Naive thymus-derived CD8-positive, alpha-beta T cell (primary cell): ENCODE measurements at regions of chr11 and their contacts with region 1.

Region 1: DNA sequence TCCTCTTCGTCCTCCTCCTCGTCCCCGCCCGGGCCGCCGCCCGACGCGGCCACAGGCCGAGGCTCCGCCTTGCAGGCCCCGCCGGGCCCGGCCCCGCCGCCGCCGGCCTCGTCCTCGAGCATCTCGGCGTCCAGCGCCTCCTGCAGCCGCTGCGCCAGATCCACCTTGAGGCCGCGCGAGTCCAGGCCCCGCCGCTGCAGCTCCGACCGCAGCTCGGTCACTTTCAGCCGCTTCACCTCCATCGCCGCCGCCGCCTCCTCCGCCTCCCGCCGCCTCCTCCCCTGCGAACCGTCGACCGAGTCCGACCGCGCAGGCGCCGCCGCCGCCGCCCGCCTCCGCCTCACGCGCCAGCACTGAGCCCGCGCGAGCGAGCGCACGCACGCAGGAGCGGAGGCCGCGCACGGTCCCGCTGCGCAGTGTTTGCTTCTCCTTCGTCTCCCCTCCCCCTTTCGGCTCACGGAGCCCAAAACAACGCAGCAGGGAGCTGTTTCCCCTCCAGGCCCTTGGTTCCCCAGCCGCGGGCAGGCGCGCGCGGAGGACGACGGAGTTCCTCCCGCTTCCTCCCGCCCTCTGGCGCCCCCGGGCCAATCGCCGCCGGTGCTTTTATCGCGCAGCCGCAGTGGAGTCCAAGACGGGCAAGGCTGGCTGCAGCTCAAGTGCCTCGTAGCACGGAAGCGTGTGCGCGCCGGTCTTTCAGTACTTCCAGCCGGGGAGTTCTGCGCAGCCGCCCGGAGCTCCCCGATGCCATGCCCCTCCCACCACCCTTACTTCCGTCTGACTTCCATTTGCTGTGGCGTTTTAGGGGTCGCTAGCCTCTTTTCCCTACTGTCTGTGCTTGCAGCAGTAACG is at the start of gene HNRNPUL2:
- DNase-seq: peak; percentile 98 to 99 (median 99)
- ATAC-seq: peak; percentile 79 to 81
- H3K4me3 Mint-ChIP-seq: peak within 1 kb of the TSS; percentile 92 to 99 (median 96)
- H3K27ac Mint-ChIP-seq: peak within 1 kb of the TSS; percentile 90 to 100 (median 99)
- H3K4me1 Mint-ChIP-seq: peaks cover 25 to 66% (median 53%) of the 10 kb centered on the region in 4 donors
- H3K27me3 Mint-ChIP-seq: peaks cover 0 to 2% (median 0%) of the 10 kb centered on the region in 5 donors
- polyA plus RNA-seq, gene HNRNPUL2: 0.99 to 3.0 (median 1.0) TPM

Region 2: DNA sequence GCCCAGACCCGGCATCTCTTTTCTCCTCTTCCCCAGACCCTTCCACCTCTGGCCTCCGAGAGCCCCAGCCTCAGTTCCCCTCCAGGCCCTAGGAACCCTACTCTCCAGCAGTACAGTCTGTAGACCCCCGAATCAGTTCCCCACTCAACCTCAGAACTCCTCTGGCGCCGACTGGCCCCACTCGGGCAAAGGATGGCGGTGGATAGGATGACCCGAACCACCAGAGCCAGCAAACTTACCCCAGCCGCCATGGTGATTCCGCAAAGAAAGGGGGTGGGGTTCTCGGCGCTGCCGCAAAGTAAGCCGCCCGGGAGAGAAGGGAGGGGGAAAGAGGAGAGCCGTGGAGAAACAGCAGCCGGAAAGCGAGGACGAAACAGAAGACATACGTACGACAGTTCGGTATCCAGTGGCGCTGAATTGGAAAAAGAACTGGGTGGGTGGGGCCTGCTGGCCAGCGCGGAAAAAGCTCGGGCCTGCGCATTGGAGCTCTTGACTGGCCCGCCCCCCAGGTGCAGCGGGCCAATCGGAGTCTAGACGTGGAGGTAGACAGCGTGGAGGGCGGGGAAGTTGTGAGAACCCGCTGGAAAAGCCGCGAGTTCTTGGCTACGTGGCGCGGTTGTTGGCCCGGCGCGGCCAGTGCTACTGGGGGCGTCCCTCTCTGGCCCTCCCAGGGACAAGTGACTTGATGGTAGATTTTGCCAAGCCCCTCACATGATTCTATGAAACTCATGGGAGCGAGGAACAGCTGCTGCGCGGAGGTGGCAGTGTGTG is 153.4 kb before region 1 on chr11 and contains the start of gene EEF1G:
- POLR2A ChIA-PET with region 1: interaction called, 23 read pairs
- DNase-seq: peak; percentile 94 to 100 (median 98)
- ATAC-seq: peak; percentile 91 to 92
- H3K4me3 Mint-ChIP-seq: peak within 1 kb of the TSS; percentile 93 to 99 (median 97)
- H3K27ac Mint-ChIP-seq: peak within 1 kb of the TSS; percentile 90 to 99 (median 98)
- H3K4me1 Mint-ChIP-seq: peaks cover 41 to 59% (median 53%) of the 10 kb centered on the region in 4 donors
- H3K27me3 Mint-ChIP-seq: no peaks in the 10 kb centered on the region
- polyA plus RNA-seq, gene EEF1G: 1,637 to 2,152 (median 1,960) TPM

Region 3: GRCh38 chr11:62645956-62646824 is 80.9 kb before region 1 on chr11 and contains the start of gene GANAB:
- POLR2A ChIA-PET with region 1: interaction called, 10 read pairs
- DNase-seq: peak; percentile 94 to 99 (median 97)
- ATAC-seq: peak; percentile 97 to 98
- H3K4me3 Mint-ChIP-seq: peak within 1 kb of the TSS; percentile 92 to 99 (median 97)
- H3K27ac Mint-ChIP-seq: peak within 1 kb of the TSS; percentile 90 to 99 (median 98)
- H3K4me1 Mint-ChIP-seq: peaks cover 9 to 50% (median 32%) of the 10 kb centered on the region in 4 donors
- H3K27me3 Mint-ChIP-seq: no peaks in the 10 kb centered on the region
- polyA plus RNA-seq, gene GANAB: 171 to 197 (median 174) TPM

Region 4: DNA sequence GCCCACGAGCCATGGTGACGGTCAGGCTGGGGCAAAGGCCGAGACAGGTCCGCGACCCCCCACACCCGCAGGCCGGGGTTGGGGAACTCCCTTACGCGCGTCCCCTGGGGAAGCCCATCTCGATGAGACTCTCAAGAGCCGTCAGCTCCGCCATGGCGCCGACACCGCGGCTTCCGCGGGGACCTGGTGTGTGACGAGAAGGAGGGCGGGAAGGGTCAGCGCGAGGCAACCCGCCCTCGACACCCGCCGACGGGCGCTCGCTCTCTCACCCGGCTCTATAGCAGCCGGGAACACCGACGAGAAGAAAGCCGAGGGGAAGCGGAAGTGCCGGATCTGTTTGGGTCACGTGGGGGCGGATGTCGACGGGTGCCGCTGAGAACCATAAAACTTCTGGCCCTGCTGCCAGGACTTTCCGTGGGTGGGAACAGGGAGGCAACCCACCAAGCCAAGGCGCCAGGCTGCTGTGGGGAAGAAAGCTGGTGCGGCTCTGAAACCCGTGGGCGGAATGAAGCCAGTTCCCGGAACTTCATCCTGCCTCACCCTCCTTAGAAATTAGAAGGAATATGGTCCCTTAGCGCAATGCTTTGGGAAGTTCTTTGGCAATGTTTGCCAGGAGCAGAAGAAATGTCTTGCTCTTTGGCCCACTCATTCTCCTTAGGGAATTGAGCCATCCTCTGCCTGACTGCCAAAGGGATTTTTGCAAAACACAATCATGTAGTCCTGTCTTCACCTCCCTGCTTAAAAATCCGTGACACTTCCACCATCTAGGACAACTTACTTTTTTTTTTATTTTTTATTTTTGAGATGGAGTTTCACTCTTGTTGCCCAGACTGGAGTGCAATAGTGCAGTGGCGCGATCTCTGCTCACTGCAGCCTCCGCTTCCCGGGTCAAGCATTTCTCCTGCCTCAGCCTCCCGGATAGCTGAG is 48.1 kb before region 1 on chr11 and contains the start of gene UBXN1:
- POLR2A ChIA-PET with region 1: interaction called, 38 read pairs
- DNase-seq: peak; percentile 68 to 89 (median 78)
- ATAC-seq: peak; percentile 84 to 87
- H3K4me3 Mint-ChIP-seq: peak within 1 kb of the TSS; percentile 86 to 94 (median 90)
- H3K27ac Mint-ChIP-seq: peak within 1 kb of the TSS; percentile 94 to 98 (median 95)
- H3K4me1 Mint-ChIP-seq: peaks cover 19 to 42% (median 38%) of the 10 kb centered on the region in 4 donors
- H3K27me3 Mint-ChIP-seq: no peaks in the 10 kb centered on the region
- polyA plus RNA-seq, gene UBXN1: 188 to 219 (median 218) TPM

Region 5: DNA sequence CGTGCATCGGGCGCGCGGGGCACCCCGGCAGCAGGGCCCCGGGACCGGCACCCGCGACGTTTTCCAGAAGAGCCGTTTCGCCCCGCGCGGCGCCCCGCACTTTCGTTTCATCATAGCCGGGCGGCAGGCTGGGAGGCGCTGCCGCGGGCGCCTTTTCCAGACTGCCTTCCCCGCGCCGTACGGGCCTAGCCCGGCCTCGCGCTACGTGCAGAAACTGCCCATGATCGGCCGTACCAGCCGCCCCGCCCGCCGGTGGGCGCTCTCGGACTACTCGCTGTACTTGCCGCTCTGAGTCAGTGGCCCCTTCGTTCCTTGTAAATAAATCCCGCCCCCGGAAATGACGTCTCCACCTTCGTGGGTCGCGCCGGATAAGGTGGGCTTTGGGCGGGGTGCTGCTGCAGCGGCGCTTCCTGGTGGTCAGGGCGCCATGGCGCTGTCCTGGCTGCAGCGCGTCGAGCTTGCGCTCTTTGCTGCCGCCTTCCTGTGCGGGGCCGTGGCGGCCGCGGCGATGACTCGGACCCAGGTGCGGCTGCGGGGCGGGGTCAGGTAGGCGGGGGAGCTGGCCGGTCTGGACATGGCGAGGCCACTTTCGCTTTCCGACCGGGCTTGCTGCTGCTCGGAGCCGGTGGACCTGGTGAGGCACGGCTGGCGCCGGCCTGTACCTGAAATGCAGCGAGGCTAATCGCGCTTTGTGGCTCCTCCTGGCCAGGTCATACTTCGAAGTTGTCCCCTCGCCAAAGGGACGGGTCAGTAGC is 60.0 kb after region 1 on chr11 and contains the start of gene TMEM179B:
- POLR2A ChIA-PET with region 1: interaction called, 41 read pairs
- DNase-seq: peak; percentile 90 to 99 (median 97)
- ATAC-seq: peak; percentile 69 to 73
- H3K4me3 Mint-ChIP-seq: peak within 1 kb of the TSS; percentile 90 to 96 (median 96)
- H3K27ac Mint-ChIP-seq: peak within 1 kb of the TSS; percentile 92 to 98 (median 96)
- H3K4me1 Mint-ChIP-seq: peaks cover 14 to 53% (median 46%) of the 10 kb centered on the region in 4 donors
- H3K27me3 Mint-ChIP-seq: no peaks in the 10 kb centered on the region
- polyA plus RNA-seq, gene TMEM179B: 109 to 126 (median 122) TPM

Region 6: DNA sequence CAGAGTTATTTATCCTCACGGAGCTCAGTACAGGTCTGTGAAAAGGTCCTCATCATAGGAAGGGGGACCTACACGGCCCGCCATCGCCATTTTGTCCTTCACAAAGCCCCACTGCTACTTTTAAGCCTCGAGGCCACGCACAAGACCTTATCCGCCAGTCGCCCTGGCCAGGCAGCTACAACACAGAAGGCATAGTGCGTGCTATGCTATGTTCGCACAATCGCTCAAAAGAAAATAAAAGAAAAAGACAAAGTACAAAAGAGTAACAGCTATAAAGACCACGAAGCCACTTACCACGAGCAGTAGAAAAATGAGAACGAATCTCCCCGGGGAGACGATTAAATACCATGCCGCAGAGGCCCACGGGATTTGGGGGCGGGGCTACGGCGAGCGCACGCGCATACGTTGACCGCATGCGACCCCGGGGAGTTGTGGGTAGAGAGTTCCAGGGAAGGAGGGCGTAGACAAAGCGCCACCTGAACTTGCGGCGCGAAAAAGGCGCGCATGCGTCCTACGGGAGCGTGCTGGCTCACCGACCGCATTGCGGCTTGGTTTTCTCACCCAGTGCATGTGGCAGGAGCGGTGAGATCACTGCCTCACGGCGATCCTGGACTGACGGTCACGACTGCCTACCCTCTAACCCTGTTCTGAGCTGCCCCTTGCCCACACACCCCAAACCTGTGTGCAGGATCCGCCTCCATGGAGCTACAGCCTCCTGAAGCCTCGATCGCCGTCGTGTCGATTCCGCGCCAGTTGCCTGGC is 128.6 kb after region 1 on chr11:
- POLR2A ChIA-PET with region 1: interaction called, 86 read pairs
- DNase-seq: peak; percentile 94 to 99 (median 98)
- ATAC-seq: peak; percentile 87 to 90
- H3K4me3 Mint-ChIP-seq: peak overlapping the region; percentile 95 to 99 (median 98)
- H3K27ac Mint-ChIP-seq: peak overlapping the region; percentile 88 to 99 (median 98)
- H3K4me1 Mint-ChIP-seq: peaks cover 33 to 54% (median 52%) of the 10 kb centered on the region in 4 donors
- H3K27me3 Mint-ChIP-seq: peaks cover 0 to 4% (median 0%) of the 10 kb centered on the region in 5 donors